ENCODE measurements at regions of chr22 and their contacts with region 1.

Region 1: DNA sequence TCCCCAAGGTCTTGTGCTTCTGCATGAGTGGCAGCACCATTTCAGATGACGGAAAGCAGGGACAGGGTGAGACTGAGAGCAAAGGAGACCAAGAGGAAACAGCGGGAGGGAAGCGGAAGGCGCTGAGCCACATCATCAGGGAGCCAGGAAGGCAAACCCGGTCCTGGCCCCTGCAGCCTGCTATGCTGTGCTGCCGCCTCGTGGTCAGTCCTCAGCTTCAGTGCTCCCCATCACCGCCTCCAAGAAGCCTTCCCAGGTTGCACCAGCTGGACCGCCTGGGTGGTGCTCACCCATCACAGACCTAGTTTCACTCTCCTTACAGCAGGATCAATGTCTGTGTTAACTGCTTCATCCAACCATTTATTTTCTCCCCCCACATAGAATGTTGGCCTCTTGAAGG is 73.0 kb upstream of the PHF21B start:
- DNase-seq: no peak
- H3K4me3 ChIP-seq: no peak overlapping the region
- H3K27me3 ChIP-seq: peaks cover 9% of the 10 kb centered on the region
- CTCF ChIP-seq: peak; percentile 27; the same call in 1 of the 2 replicates

Region 2: DNA sequence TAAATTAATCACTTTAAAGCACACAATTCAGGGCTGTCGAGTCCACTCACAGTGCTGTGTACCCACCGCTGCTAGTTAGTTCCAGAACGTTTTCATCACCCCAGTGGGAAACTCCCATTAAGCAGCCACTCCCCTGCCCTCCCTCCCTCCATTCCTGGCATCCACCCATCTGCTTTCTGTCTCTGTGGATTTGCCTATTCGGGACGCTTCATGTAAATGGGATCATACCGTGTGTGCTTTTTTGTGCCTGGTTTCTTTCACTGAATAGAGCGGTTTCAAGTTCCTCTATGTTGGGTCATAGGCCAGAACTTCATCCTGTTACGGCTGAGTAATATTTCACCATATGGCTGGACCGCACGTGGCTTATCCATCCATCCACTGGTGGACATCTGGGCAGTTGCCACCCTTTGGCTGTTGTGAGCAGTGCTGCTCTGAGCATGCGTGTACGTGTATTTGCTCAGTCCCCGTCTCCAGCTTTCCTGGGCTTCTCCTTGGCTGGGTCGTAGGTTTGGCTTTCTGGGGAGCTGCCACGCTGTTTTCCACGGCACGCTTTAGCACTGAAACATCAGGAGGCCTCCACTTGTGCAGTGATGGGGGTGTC is 300.3 kb before region 1 on chr22:
- CTCF ChIA-PET with region 1: no interaction called
- POLR2A ChIA-PET with region 1: no interaction called
- DNase-seq: no peak
- H3K4me3 ChIP-seq: no peak overlapping the region
- H3K27me3 ChIP-seq: no peaks in the 10 kb centered on the region
- CTCF ChIP-seq: no peak

Region 3: DNA sequence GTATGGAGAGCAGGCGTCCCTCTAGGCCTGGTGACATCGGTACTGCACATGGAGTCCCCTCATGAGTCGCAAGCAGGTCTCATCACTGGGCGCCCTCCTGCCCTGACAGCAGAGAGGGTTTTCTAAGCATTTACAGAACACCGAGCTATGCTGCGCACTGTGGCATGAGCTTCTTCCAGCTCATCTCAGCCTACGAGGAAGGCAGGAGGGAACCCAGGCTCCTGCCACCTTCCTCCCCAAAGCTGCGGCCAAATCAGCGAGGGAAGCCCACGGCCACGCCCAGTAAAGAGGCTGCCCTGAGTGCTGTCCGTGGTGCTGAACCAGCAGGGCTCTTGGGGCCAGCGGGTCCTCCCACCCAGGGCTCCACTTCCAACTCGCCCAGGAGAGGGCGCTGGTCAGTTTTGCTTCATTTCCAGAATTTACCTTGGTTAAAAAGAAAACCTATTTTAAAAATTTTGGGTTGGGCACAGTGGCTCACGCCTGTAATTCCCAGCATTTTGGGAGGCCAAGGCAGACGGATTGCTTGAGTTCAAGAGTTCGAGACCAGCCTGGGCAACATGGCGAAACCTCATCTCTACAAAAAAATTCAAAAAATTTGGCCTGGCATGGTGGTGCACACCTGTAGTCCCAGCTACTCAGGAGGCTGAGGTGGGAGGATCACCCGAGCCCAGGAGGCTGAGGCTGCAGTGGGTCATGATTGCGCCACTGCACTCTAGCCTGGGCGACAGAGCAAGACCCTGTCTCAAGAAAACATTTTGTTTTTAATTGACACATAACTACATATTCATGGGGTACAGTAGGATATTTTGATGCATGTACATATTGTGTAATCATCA is 107.2 kb before region 1 on chr22:
- CTCF ChIA-PET with region 1: interaction called, 11 read pairs
- POLR2A ChIA-PET with region 1: no interaction called
- DNase-seq: peak; percentile 4
- H3K4me3 ChIP-seq: no peak overlapping the region
- H3K27me3 ChIP-seq: peaks cover 2% of the 10 kb centered on the region
- CTCF ChIP-seq: peak; percentile 83

Measured in BJ (cell line).